Body of pancreas (tissue), 4 donors: ENCODE measurements at regions of chr6 and their contacts with region 1.

Region 1: DNA sequence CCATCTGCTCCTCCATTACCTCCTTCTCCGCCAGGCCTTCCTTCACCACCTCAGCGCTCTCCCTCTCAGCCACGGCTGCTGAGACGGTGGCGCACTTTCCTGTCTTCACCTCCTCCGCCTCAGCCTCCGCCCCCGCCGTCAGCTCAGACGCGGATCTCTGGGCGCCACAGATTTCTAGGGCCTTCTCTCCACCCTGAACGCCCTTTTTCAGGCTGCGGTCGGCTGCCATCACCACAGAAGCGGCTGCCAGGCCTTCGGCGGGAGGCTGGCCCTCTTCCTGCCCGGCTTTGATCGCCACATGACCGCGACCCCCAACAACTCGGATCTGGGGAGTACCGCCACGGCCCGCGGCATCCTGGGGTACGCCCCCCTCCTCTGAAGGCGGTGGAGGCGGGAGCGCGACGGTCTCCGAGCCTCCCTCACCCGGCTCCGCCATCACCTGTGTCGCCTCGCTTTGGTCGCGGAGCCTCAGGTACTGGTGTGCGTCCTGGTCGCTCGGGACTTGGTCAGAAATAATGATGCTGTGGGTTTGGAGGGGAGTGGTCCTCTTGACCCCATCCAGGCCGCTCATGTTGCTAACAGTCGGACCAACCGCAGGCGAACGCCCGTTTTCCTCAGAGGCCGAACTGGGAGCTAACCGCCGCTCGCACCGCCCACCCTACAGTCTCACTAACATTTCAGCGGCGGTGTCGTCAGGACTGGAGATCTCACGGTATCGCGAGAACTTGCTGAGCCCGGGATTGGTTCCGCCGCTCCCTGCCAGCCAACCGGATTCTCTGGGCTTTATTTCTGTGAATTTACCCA is at the start of gene TSPYL1:
- DNase-seq: peak; percentile 96 to 98 (median 98)
- ATAC-seq: peak; percentile 98
- H3K4me3 ChIP-seq: peak within 1 kb of the TSS; percentile 79 to 89
- H3K27ac ChIP-seq: peak within 1 kb of the TSS; percentile 95 to 99 (median 98)
- H3K4me1 ChIP-seq: peaks cover 48% of the 10 kb centered on the region
- H3K27me3 ChIP-seq: no peaks in the 10 kb centered on the region
- CTCF ChIP-seq: peak in 1 of 7 experiments; percentile 8
- POLR2A ChIP-seq: peak; percentile 97 to 99 (median 99)
- total RNA-seq, gene TSPYL1: 44.1 to 45.2 TPM

Region 2: DNA sequence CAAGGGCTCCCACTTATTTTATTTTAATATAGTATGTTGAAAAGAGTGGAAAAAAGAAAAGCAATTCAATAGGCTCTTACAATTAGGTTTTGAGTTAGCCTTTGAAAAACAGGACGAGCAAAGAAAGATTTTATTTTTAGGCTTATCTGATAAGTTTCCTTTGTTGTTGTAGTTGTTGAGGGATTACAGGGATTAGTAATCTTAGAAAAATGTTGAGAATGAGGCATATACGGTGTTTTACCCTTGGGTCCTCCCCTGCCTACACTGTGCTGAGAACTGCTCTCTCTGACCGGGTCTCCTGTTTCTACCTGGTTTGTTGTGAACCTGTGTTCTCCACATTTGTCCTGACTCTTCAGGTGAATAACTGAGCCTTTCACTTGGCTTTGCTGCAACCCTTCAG is 249.3 kb after region 1 on chr6:
- intact Hi-C with region 1: loop called (anchors 10 kb)
- DNase-seq: no peak
- ATAC-seq: no peak
- H3K4me3 ChIP-seq: no peak overlapping the region
- H3K27ac ChIP-seq: no peak overlapping the region
- H3K4me1 ChIP-seq: no peaks in the 10 kb centered on the region
- H3K27me3 ChIP-seq: peaks cover 0 to 3% of the 10 kb centered on the region in 2 donors
- CTCF ChIP-seq: no peak
- POLR2A ChIP-seq: no peak